ENCODE measurements at regions of chr12 and their contacts with region 1.

Region 1: GRCh38 chr12:52327052-52327829 is 6.0 kb upstream of the KRT83 start:
- DNase-seq: peak; percentile 67 to 75
- H3K4me3 ChIP-seq: no peak overlapping the region
- H3K27ac ChIP-seq: no peak overlapping the region
- H3K4me1 ChIP-seq: no peaks in the 10 kb centered on the region
- H3K27me3 ChIP-seq: no peaks in the 10 kb centered on the region
- CTCF ChIP-seq: peak; percentile 97 to 100 (median 100)
- EP300 ChIP-seq: no peak
- POLR2A ChIP-seq: no peak
- RAD21 ChIP-seq: peak; percentile 81 to 88

Region 2: DNA sequence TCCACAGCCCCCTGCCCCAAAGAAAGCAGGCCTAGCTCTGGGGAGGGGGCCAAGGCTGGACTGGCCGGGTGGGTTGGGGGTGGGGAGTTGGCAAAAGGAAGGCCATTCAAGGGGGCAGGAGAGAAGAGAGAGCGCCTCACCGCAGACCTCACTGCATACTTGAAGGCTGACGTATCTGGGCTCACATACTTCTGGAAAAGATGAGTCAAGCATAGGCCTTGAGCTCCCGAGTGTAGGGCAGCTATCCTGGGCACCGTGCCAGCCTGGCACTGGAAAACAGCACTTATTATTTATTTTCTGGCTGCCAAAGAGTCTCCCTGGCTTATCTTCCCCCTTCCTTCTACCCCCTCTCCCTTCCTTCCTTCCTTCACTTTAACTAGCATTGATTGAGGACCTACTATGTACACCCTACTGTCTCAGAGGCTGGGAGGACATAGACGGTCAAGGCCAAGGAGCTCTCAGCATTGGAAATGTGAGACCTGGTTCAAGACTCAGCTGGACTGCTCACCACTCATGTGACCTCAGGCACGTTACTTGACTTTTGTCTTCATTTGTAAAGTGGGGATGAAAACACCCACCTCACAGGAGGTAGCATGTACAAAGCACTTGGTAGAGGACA is 135.0 kb before region 1 on chr12:
- CTCF ChIA-PET with region 1: interaction called, 18 read pairs
- POLR2A ChIA-PET with region 1: no interaction called
- DNase-seq: no peak
- H3K4me3 ChIP-seq: no peak overlapping the region
- H3K27ac ChIP-seq: no peak overlapping the region
- H3K4me1 ChIP-seq: peaks cover 0 to 11% (median 6%) of the 10 kb centered on the region in 4 experiments; a peak in 4 of 7 replicates
- H3K27me3 ChIP-seq: no peaks in the 10 kb centered on the region
- CTCF ChIP-seq: no peak
- EP300 ChIP-seq: no peak
- POLR2A ChIP-seq: no peak
- RAD21 ChIP-seq: no peak

Region 3: GRCh38 chr12:52249051-52249461 is 78.2 kb before region 1 on chr12:
- CTCF ChIA-PET with region 1: interaction called, 30 read pairs
- POLR2A ChIA-PET with region 1: no interaction called
- DNase-seq: no peak
- H3K4me3 ChIP-seq: no peak overlapping the region
- H3K27ac ChIP-seq: no peak overlapping the region
- H3K4me1 ChIP-seq: peaks cover 0 to 12% (median 5%) of the 10 kb centered on the region in 4 experiments; a peak in 5 of 7 replicates
- H3K27me3 ChIP-seq: peaks cover 4 to 29% (median 23%) of the 10 kb centered on the region in 4 experiments
- CTCF ChIP-seq: no peak
- EP300 ChIP-seq: no peak
- POLR2A ChIP-seq: no peak
- RAD21 ChIP-seq: no peak

Region 4: GRCh38 chr12:52285172-52285745 is 42.0 kb before region 1 on chr12:
- CTCF ChIA-PET with region 1: interaction called, 39 read pairs
- POLR2A ChIA-PET with region 1: no interaction called
- DNase-seq: no peak
- H3K4me3 ChIP-seq: no peak overlapping the region
- H3K27ac ChIP-seq: no peak overlapping the region
- H3K4me1 ChIP-seq: peaks cover 0 to 2% (median 0%) of the 10 kb centered on the region in 4 experiments; a peak in 1 of 7 replicates
- H3K27me3 ChIP-seq: no peaks in the 10 kb centered on the region
- CTCF ChIP-seq: no peak
- EP300 ChIP-seq: no peak
- POLR2A ChIP-seq: no peak
- RAD21 ChIP-seq: no peak

Region 5: GRCh38 chr12:52351196-52352059 is 24.2 kb after region 1 on chr12:
- CTCF ChIA-PET with region 1: interaction called, 126 read pairs
- POLR2A ChIA-PET with region 1: no interaction called
- DNase-seq: no peak
- H3K4me3 ChIP-seq: no peak overlapping the region
- H3K27ac ChIP-seq: no peak overlapping the region
- H3K4me1 ChIP-seq: no peaks in the 10 kb centered on the region
- H3K27me3 ChIP-seq: no peaks in the 10 kb centered on the region
- CTCF ChIP-seq: no peak
- EP300 ChIP-seq: no peak
- POLR2A ChIP-seq: no peak
- RAD21 ChIP-seq: no peak

Measured in H1 (cell line).